AG04449 (cell line): ENCODE measurements at regions of chr9 and their contacts with region 1.

Region 1: GRCh38 chr9:112905084-112905483 is 14.4 kb upstream of the SLC46A2 start:
- DNase-seq: no peak
- H3K4me3 ChIP-seq: no peak overlapping the region
- CTCF ChIP-seq: no peak

Region 2: GRCh38 chr9:112642126-112642525 is 263.0 kb before region 1 on chr9:
- CTCF ChIA-PET with region 1: no interaction called
- POLR2A ChIA-PET with region 1: no interaction called
- DNase-seq: no peak
- H3K4me3 ChIP-seq: no peak overlapping the region
- CTCF ChIP-seq: no peak

Region 3: DNA sequence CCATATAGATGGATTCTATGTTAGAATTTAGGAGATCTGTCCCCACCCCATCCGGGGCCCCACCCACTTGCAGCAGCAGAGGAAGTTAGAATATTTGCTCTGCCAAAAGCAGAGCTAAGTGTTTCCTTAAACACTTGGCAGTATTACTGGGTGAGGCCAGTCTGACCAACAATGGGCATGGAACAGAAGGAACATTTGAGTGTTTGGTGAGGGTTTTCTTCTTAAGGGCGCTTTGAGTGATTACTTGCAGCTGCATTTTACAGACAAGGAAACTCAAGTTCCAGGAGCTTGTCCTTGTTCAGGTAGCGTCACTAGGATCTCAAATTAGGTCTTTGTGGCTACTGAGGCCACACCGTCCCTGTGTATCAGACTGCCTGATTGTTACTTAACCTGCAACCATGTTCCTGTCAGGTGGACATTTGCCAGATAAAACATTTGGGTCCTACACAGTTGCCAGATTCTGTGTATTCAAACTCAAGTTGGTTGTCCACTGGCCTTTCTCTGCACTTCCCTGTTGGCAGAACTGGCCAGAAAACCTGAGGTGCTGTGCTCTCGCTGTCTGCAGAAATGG is 73.7 kb before region 1 on chr9:
- CTCF ChIA-PET with region 1: interaction called, 40 read pairs
- POLR2A ChIA-PET with region 1: no interaction called
- DNase-seq: no peak
- H3K4me3 ChIP-seq: no peak overlapping the region
- CTCF ChIP-seq: no peak

Region 4: DNA sequence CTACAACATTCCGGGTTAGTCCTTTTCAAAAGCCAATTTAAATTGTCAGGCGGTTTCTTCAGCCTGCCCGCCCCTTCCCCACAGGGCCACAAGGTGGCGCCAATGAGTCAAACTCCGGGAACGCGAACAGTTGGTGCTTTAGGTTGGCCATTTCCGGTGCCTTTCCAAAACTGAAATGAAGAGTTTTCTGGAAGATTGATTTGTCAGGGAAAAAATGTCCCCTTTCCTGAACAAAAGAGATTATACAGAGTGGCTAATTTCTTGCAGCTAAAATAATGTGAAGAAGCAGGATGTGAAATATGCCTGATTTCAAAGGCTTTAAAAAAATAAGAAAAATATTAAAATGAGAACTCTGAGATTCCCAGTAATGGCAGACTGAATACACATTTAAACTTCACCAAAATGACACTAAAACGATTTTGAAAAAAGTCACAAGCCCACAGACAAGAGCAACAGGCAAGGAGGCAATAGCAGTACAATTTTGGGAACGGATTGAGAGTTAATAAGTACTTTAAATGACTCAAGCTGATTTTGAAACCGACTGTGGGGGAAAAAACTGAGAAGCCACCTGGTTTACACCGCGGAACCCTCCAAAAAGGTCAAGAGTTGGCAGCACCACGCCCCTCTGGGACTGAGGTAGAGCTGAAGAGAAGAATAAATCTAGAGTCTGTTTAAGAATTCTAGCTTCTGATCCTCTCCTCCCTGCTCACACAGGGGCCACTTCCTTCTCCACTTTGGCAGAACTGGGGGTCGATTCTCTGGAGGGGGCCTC is 60.1 kb before region 1 on chr9:
- CTCF ChIA-PET with region 1: interaction called, 264 read pairs
- POLR2A ChIA-PET with region 1: no interaction called
- DNase-seq: no peak
- H3K4me3 ChIP-seq: no peak overlapping the region
- CTCF ChIP-seq: peak; percentile 92

Region 5: DNA sequence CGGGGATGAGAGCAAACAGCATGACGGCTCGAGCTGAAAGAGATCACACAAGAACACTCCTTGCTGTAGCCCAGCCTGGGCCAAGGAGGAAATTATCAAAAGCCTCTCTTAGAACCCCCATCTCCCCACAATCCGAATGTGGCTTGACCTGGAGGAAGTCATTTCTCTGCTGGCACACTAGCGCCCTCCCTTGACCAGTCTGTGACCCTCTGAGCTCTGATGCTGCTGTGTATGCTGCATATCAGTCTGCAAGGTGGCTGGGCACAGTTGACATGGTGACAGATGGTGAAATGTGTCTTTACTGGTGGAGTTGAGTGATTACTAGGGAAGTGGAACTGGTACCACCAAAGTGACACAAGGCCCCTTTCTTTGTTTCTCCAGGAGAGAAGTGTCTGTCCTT is 17.7 kb before region 1 on chr9:
- CTCF ChIA-PET with region 1: interaction called, 67 read pairs
- POLR2A ChIA-PET with region 1: no interaction called
- DNase-seq: no peak
- H3K4me3 ChIP-seq: no peak overlapping the region
- CTCF ChIP-seq: no peak